MCF 10A (cell line): ENCODE measurements at regions of chr7 and their contacts with region 1.

Region 1: GRCh38 chr7:22110227-22110839 is 164.6 kb upstream of the CDCA7L start:
- DNase-seq: peak; percentile 81
- H3K4me3 Mint-ChIP-seq: no peak overlapping the region
- H3K27ac Mint-ChIP-seq: no peak overlapping the region
- H3K4me1 Mint-ChIP-seq: no peaks in the 10 kb centered on the region
- H3K27me3 Mint-ChIP-seq: no peaks in the 10 kb centered on the region
- CTCF ChIP-seq: peak; percentile 87

Region 2: GRCh38 chr7:22082886-22083703 is 27.2 kb before region 1 on chr7:
- CTCF ChIA-PET with region 1: interaction called, 11 read pairs
- POLR2A ChIA-PET with region 1: no interaction called
- intact Hi-C with region 1: no loop called
- DNase-seq: peak; percentile 76
- H3K4me3 Mint-ChIP-seq: peak overlapping the region; percentile 73
- H3K27ac Mint-ChIP-seq: peak overlapping the region; percentile 73
- H3K4me1 Mint-ChIP-seq: no peaks in the 10 kb centered on the region
- H3K27me3 Mint-ChIP-seq: peaks cover 22% of the 10 kb centered on the region
- CTCF ChIP-seq: peak; percentile 93

Region 3: DNA sequence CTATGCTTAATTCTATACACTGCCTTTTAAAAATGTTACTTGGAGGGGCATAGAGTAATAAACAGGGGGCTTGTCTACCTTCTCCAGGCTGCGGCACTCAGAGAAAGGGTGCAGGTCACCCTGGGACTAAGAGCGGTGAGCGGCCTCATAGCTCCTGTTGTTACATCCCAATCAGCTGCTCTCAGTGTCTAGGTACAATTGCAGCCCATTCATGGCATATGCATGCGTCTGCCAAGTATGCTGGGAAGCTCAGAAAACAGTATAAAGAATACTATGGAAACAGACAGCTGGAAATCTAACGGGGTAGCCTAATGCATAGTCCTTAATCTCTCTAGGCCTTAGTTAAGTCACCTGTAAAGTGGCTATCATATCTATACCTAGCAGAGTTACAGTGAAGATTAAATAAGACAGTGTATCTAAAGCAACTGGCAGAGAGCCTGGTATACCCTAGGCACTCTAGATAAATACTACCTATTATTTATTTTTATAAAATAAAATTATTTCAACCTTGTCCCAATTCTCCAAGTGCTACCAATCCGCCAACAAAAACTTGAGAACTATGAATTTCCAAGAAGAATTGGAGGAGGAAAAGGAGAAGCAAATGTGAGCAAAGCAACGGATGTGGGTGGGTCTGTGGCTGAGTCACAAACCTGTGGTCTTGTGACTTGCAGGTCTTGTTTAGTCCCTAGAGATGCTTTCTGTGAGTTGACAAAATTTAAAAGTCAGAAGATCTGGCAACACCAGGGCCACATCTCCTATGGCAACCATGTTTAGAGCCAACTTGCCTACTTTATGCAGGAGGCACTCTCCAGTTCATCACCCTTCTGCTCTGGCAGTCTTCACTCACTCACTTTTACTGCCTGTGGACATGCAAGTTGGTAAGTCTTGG is 63.6 kb after region 1 on chr7:
- CTCF ChIA-PET with region 1: interaction called, 10 read pairs
- POLR2A ChIA-PET with region 1: no interaction called
- intact Hi-C with region 1: no loop called
- DNase-seq: peak; percentile 5
- H3K4me3 Mint-ChIP-seq: no peak overlapping the region
- H3K27ac Mint-ChIP-seq: no peak overlapping the region
- H3K4me1 Mint-ChIP-seq: no peaks in the 10 kb centered on the region
- H3K27me3 Mint-ChIP-seq: no peaks in the 10 kb centered on the region
- CTCF ChIP-seq: no peak

Region 4: DNA sequence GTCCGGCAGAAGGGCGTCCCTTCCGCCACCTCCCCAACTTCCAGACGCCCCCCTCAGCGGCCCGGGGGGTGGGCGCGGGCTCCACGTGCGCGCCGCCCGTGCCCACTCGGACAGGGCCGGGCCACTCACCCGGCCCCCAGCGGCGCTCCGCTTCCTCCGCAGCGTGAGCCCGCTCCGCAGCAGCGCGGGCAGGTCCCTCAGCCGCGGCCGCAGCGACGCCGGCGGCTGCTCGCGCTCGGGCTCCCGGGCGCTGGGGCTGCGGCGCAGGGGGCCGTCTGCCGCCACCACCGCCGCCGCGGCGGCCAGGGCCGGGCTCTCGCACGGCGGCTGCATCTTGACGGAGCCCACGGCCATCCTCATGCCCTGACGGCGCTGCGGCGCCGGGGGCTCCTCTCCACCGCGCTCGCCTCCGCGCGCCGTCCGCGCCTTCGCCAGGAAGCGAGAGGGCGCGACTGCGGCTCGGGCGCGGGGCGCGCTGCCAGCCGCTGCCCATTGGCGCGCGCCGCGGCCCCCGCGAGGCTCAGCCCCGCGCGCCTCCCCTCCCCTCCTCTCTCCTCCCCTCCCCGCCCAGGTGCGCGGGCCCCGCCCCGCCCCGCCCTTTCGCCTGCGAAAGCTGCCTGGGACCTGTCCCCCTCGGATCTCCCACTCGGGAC is 246.5 kb after region 1 on chr7 and contains the start of gene RAPGEF5:
- CTCF ChIA-PET with region 1: interaction called, 14 read pairs
- POLR2A ChIA-PET with region 1: no interaction called
- intact Hi-C with region 1: no loop called
- DNase-seq: peak; percentile 68
- H3K4me3 Mint-ChIP-seq: peak within 1 kb of the TSS; percentile 76
- H3K27ac Mint-ChIP-seq: peak within 1 kb of the TSS; percentile 73
- H3K4me1 Mint-ChIP-seq: peaks cover 30% of the 10 kb centered on the region
- H3K27me3 Mint-ChIP-seq: no peaks in the 10 kb centered on the region
- CTCF ChIP-seq: no peak
- total RNA-seq, gene RAPGEF5: 1.9 TPM in 2 replicates

Region 5: GRCh38 chr7:22469371-22470143 is 359.2 kb after region 1 on chr7:
- CTCF ChIA-PET with region 1: interaction called, 10 read pairs
- POLR2A ChIA-PET with region 1: no interaction called
- intact Hi-C with region 1: no loop called
- DNase-seq: no peak
- H3K4me3 Mint-ChIP-seq: no peak overlapping the region
- H3K27ac Mint-ChIP-seq: no peak overlapping the region
- H3K4me1 Mint-ChIP-seq: no peaks in the 10 kb centered on the region
- H3K27me3 Mint-ChIP-seq: no peaks in the 10 kb centered on the region
- CTCF ChIP-seq: no peak

Region 6: DNA sequence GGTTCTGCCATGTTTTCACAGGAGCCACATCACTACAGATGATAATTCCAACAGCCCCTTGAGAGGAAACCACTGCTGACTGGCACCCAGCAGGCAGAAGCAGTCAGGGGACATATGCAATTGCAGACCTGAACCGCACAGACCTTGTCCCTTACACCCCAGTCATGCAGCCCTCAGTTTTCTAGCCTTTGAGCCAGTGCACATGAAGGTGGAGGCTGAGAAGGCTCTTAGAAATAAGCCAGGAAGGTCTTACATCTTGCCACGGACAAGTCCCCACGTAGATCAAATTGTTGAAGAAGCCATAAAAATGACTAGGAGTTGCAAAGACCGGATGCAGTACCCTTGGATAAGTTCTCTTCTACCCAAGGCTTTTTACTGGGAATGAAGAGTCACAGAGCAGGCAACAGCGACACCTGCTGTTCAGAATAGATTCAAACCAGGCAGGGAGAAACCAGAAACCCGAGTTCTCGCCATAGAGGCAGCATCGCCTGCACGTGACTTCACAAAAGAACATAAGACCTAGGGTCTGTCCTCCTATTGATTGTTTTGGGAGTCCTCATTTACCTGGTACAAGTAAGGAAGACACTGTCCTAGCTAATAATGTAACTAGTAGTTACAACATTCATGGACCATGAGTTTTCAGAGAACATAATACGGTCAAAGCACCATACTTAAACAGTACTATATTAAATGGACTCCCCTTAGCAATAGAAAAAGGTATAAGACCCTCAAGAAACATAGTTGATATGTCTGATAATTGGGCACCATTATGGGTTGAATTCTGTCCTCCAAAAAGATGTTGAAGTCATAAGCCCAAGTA is 378.5 kb after region 1 on chr7:
- CTCF ChIA-PET with region 1: interaction called, 93 read pairs
- POLR2A ChIA-PET with region 1: no interaction called
- intact Hi-C with region 1: loop called (anchors 1 kb)
- DNase-seq: peak; percentile 83
- H3K4me3 Mint-ChIP-seq: no peak overlapping the region
- H3K27ac Mint-ChIP-seq: no peak overlapping the region
- H3K4me1 Mint-ChIP-seq: peaks cover 6% of the 10 kb centered on the region
- H3K27me3 Mint-ChIP-seq: no peaks in the 10 kb centered on the region
- CTCF ChIP-seq: peak; percentile 93